ENCODE measurements at regions of chr3 and their contacts with region 1.

Region 1: DNA sequence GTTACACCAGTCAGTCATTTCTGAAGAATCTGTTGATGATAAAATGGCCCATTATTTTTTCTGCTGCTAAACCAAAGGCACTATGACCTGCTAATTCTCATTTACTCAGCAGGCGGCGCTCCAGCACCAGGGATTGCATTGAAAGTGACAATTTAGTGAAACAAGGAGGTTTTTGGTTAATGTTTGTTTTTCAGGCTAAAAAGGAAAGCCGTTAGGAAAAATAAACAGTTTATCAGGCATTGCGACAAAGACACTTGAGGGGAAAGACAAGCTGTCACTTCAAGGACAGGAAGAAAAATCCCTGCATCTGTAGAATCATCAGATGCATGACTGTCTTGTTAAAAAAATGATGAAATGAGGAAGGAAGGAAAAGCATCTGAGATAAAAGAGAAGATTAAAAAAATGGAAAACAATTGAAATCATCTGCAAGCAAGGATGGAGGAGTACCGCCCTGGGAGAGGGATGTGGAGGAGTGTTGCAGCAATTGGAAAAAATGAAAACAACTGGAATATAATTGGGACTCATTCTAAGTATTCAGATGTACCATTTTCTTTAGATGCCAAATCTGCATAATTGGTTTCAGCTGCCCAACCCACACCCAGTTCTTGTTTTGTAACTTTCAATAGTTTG is 54.0 kb downstream of the NR1D2 start:
- DNase-seq: peak; percentile 73
- H3K4me3 Mint-ChIP-seq: no peak overlapping the region
- H3K27ac Mint-ChIP-seq: no peak overlapping the region
- H3K4me1 Mint-ChIP-seq: peaks cover 5% of the 10 kb centered on the region
- H3K27me3 Mint-ChIP-seq: no peaks in the 10 kb centered on the region
- CTCF ChIP-seq: peak; percentile 95

Region 2: DNA sequence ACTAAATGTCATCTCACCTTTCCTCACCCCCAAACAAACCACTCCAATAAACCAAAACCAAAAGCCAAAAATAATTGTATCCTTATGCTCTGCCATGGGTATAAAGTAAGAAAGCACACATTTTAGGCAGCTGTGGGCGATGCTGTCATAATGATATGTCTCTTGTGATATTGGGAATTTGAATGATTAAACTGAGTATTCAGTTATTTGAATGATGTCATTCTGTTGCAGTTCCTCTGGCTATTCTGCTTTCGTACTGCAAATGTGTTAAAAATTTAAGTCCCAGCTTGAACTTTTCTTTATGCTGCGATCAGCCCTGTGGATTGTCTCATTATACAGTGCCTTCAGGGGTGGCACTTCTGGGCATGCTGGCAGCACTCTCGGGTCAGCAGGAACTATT is 64.9 kb before region 1 on chr3:
- CTCF ChIA-PET with region 1: no interaction called
- POLR2A ChIA-PET with region 1: no interaction called
- intact Hi-C with region 1: no loop called
- DNase-seq: no peak
- H3K4me3 Mint-ChIP-seq: no peak overlapping the region
- H3K27ac Mint-ChIP-seq: no peak overlapping the region
- H3K4me1 Mint-ChIP-seq: peaks cover 4% of the 10 kb centered on the region
- H3K27me3 Mint-ChIP-seq: no peaks in the 10 kb centered on the region
- CTCF ChIP-seq: no peak

Region 3: GRCh38 chr3:24012589-24013269 is 13.6 kb after region 1 on chr3:
- CTCF ChIA-PET with region 1: interaction called, 12 read pairs
- POLR2A ChIA-PET with region 1: no interaction called
- intact Hi-C with region 1: no loop called
- DNase-seq: no peak
- H3K4me3 Mint-ChIP-seq: no peak overlapping the region
- H3K27ac Mint-ChIP-seq: peak overlapping the region; percentile 7
- H3K4me1 Mint-ChIP-seq: peaks cover 12% of the 10 kb centered on the region
- H3K27me3 Mint-ChIP-seq: no peaks in the 10 kb centered on the region
- CTCF ChIP-seq: no peak

Region 4: DNA sequence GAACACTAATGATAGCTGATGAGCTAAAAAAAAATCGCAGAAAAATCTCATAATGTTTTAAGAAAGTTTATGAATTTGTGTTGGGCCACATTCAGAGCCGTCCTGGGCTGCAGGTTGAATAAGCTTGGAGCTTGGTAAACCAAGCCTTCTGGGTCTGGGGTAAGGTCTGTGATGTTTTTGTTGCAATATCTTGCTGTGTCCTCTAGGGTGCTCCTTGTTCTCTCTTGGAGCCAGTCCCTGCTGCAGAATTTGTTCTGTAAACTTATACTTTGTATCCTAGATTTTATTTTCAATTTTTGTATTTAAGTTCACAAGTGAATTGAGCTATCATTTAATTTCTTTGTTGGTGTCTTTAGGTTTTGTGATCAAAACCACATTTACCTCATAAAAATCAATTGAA is 89.7 kb after region 1 on chr3:
- CTCF ChIA-PET with region 1: interaction called, 3 read pairs
- POLR2A ChIA-PET with region 1: no interaction called
- intact Hi-C with region 1: loop called (anchors 10 kb)
- DNase-seq: peak; percentile 53
- H3K4me3 Mint-ChIP-seq: no peak overlapping the region
- H3K27ac Mint-ChIP-seq: no peak overlapping the region
- H3K4me1 Mint-ChIP-seq: no peaks in the 10 kb centered on the region
- H3K27me3 Mint-ChIP-seq: no peaks in the 10 kb centered on the region
- CTCF ChIP-seq: peak; percentile 53

Region 5: DNA sequence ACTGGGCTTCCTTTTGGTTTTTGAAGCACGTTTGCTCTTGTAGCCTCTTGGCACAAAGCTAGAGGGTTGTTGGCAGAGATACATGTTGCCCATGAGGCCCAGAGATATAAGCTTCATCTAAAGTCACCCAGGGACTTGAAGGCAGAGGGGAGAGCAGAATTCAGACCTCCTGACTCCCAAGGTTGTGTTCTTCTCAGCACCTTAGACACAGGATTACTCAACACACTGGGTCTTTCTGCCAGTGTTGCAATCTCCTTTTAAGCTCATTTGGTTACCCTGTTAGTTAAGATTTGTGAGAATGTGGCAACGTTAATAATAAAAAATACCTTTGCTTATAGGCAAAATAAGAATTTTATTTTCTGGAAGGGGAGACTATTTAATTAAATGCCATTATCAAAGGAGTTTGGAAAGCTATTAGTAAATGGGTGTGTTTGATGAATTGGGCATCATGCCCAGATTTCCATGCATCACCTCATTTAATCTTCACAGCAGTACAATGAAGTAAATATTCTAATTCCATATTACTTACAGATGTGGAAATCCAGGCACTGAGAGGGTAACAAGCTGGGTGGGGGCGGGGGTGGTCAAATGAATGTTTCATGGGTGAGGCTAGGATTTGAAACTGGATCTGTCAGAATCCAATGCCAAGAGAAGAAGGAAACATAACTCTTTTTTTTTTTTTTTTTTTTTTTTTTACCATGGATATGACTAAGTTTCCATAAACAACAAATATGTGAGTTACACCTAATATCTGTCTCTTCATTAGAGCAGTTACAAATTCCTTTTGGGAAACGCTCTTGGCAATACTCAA is 129.3 kb after region 1 on chr3:
- CTCF ChIA-PET with region 1: interaction called, 3 read pairs
- POLR2A ChIA-PET with region 1: no interaction called
- intact Hi-C with region 1: loop called (anchors 1 kb)
- DNase-seq: peak; percentile 90
- H3K4me3 Mint-ChIP-seq: peak overlapping the region; percentile 19
- H3K27ac Mint-ChIP-seq: peak overlapping the region; percentile 88
- H3K4me1 Mint-ChIP-seq: peaks cover 31% of the 10 kb centered on the region
- H3K27me3 Mint-ChIP-seq: no peaks in the 10 kb centered on the region
- CTCF ChIP-seq: no peak

Region 6: DNA sequence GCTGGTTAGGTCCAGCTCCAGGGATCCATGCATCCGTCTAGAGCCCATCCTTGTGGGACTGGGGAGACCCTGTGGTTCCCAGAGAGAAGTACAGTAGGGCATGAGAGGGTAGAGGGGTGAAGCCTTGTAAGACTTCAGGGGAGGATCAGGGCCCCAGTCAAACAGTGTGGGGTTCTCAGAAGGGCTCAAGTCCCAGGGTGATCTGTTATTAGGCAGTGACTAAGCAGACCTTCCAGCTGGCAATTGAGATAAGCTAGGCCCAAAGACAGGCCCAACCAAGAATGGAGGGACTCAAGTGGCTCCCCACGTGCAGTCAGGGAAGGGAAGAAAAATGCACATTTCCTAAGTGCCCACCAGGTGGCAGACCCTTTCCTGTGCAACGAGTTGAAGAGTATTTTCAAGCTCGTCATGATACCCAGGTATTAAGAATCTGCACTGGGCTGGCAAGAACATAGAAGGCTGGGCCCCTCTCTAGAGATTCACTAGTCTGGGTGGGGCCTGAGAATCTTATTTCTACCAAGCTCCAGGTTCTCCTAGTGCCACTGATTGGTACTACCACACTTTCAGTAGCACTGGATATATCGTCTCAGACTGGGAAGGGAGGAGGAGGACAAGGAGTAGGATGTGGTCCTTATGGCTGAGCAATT is 186.7 kb after region 1 on chr3:
- CTCF ChIA-PET with region 1: interaction called, 4 read pairs
- POLR2A ChIA-PET with region 1: no interaction called
- intact Hi-C with region 1: loop called (anchors 5 kb)
- DNase-seq: peak; percentile 63
- H3K4me3 Mint-ChIP-seq: no peak overlapping the region
- H3K27ac Mint-ChIP-seq: peak overlapping the region; percentile 80
- H3K4me1 Mint-ChIP-seq: no peaks in the 10 kb centered on the region
- H3K27me3 Mint-ChIP-seq: no peaks in the 10 kb centered on the region
- CTCF ChIP-seq: peak; percentile 74

Region 7: DNA sequence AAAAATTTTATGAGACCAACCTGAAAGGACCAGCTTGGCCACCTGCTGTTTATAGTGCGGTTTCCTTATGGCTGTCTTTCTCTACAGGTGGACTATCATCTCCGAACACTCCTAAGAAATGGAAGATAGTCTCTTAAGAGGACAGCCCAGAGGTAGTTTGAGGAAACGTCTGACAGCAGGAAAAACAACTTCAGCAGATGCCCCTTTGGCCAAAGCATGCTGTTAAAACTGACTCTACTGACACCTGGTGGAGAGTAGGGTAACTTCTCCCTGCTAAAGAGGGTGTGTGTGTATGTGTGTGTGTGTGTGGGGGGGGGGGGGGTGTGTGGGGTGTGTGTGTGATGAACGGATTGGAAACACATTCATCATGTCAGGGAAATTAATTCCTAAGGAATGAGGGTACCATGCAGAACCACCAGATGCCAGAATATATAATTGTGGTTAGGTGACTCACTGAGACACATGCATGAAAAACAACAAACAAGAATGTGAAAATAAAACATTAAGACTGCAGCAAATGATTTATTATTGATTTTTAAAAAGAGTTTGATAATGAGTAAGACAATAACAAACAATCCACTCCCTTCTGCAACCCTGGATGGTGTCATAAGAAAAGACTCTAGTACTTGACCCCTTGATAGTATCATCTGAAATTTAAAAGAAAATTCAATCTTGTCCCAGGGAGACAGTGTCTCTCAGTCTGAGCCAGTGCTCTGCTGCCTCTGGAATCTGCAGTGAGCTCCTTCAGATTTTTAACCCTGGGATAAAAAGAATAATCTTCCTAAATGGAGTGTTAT is 239.0 kb after region 1 on chr3:
- CTCF ChIA-PET with region 1: interaction called, 87 read pairs
- POLR2A ChIA-PET with region 1: interaction called, 3 read pairs
- intact Hi-C with region 1: loop called (anchors 1 kb)
- DNase-seq: peak; percentile 85
- H3K4me3 Mint-ChIP-seq: no peak overlapping the region
- H3K27ac Mint-ChIP-seq: peak overlapping the region; percentile 91
- H3K4me1 Mint-ChIP-seq: peaks cover 40% of the 10 kb centered on the region
- H3K27me3 Mint-ChIP-seq: no peaks in the 10 kb centered on the region
- CTCF ChIP-seq: peak; percentile 65

Region 8: GRCh38 chr3:24264748-24265158 is 265.6 kb after region 1 on chr3:
- CTCF ChIA-PET with region 1: interaction called, 7 read pairs
- POLR2A ChIA-PET with region 1: no interaction called
- intact Hi-C with region 1: loop called (anchors 1 kb)
- DNase-seq: peak; percentile 53
- H3K4me3 Mint-ChIP-seq: no peak overlapping the region
- H3K27ac Mint-ChIP-seq: no peak overlapping the region
- H3K4me1 Mint-ChIP-seq: peaks cover 5% of the 10 kb centered on the region
- H3K27me3 Mint-ChIP-seq: no peaks in the 10 kb centered on the region
- CTCF ChIP-seq: peak; percentile 71